A549 (cell line): ENCODE measurements at regions of chr5 and their contacts with region 1.

Region 1: DNA sequence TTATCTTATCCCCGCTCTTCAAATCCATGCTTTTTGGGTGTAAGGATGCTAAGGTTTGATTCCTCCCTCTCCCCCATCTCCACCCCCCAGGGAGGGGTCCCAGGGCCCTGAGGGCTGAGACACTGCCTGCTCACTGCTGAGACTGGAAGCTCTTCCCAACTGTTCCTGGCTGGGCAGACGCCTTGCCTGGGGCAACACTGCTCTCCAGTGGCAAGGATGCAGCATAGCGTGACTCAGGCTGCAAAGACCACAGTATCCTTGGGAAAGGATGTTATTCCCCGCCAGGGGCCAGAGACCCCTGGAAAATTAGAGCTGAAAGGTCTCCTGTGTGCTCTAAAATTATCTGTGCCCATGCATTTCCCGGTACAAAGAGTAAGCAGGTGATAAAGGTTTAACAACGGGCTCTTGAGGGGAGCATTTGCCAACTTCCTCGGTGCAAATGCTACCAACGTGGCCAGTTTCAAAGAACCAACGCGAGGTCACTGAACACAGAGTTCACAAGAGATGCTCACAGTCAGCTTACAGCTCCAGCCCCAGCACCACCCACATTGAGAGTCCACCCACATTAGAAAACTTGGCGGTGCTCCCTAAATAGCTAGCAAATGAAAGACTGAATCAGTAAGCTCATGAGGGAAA is 271.9 kb downstream of the NSG2 start:
- DNase-seq: peak; percentile 60 to 68
- ATAC-seq: peak; percentile 83 to 98
- H3K4me3 ChIP-seq: no peak overlapping the region
- H3K27ac ChIP-seq: no peak overlapping the region
- H3K4me1 ChIP-seq: no peaks in the 10 kb centered on the region
- CTCF ChIP-seq: peak; percentile 79
- EP300 ChIP-seq: no peak
- POLR2A ChIP-seq: no peak
- RAD21 ChIP-seq: peak; percentile 94 to 95

Region 2: DNA sequence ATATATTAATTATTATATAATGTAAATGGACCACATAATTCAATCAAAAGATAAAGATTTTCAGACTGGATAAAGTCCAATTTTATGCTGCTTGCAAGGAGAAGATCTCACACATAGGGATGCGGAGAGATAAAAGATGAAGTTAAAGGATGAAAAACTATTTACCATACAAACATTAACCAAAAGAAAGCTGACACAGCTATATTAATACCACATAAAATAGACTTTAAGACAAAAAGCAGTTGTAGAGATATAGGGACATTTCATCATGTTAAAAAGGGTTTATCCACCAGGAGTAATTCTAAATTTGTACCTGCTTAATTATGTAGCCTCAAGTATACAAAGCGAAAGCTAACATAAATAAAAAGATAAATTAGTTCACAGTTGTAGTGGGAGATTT is 287.1 kb before region 1 on chr5:
- CTCF ChIA-PET with region 1: interaction called, 12 read pairs
- POLR2A ChIA-PET with region 1: no interaction called
- DNase-seq: no peak
- ATAC-seq: no peak
- H3K4me3 ChIP-seq: no peak overlapping the region
- H3K27ac ChIP-seq: no peak overlapping the region
- H3K4me1 ChIP-seq: no peaks in the 10 kb centered on the region
- CTCF ChIP-seq: no peak
- EP300 ChIP-seq: no peak
- POLR2A ChIP-seq: no peak
- RAD21 ChIP-seq: no peak

Region 3: GRCh38 chr5:174045470-174046025 is 271.8 kb before region 1 on chr5 and contains the start of gene NSG2:
- CTCF ChIA-PET with region 1: interaction called, 422 read pairs
- POLR2A ChIA-PET with region 1: interaction called, 14 read pairs
- DNase-seq: peak; percentile 72 to 91
- ATAC-seq: peak; percentile 99 to 100
- H3K4me3 ChIP-seq: no peak within 1 kb of the TSS
- H3K27ac ChIP-seq: no peak within 1 kb of the TSS
- H3K4me1 ChIP-seq: no peaks in the 10 kb centered on the region
- CTCF ChIP-seq: peak; percentile 81
- EP300 ChIP-seq: no peak
- POLR2A ChIP-seq: no peak
- RAD21 ChIP-seq: peak; percentile 92
- polyA plus RNA-seq, gene NSG2: 0.05 and 0.06 TPM in 2 replicates

Region 4: GRCh38 chr5:174295702-174296436 is 21.5 kb before region 1 on chr5:
- CTCF ChIA-PET with region 1: interaction called, 52 read pairs
- POLR2A ChIA-PET with region 1: interaction called, 4 read pairs
- DNase-seq: no peak
- ATAC-seq: no peak
- H3K4me3 ChIP-seq: no peak overlapping the region
- H3K27ac ChIP-seq: no peak overlapping the region
- H3K4me1 ChIP-seq: no peaks in the 10 kb centered on the region
- CTCF ChIP-seq: no peak
- EP300 ChIP-seq: no peak
- POLR2A ChIP-seq: no peak
- RAD21 ChIP-seq: no peak

Region 5: GRCh38 chr5:174306345-174307030 is 10.9 kb before region 1 on chr5:
- CTCF ChIA-PET with region 1: interaction called, 52 read pairs
- POLR2A ChIA-PET with region 1: no interaction called
- DNase-seq: no peak
- ATAC-seq: no peak
- H3K4me3 ChIP-seq: no peak overlapping the region
- H3K27ac ChIP-seq: no peak overlapping the region
- H3K4me1 ChIP-seq: no peaks in the 10 kb centered on the region
- CTCF ChIP-seq: no peak
- EP300 ChIP-seq: no peak
- POLR2A ChIP-seq: no peak
- RAD21 ChIP-seq: no peak

Region 6: GRCh38 chr5:174327317-174328236 is 10.2 kb after region 1 on chr5:
- CTCF ChIA-PET with region 1: interaction called, 41 read pairs
- POLR2A ChIA-PET with region 1: no interaction called
- DNase-seq: peak; percentile 78 to 83
- ATAC-seq: peak; percentile 75 to 94
- H3K4me3 ChIP-seq: no peak overlapping the region
- H3K27ac ChIP-seq: peak overlapping the region; percentile 17 to 73; a peak in 3 of 6 replicates
- H3K4me1 ChIP-seq: peaks cover 9% of the 10 kb centered on the region; the same call in 1 of the 3 replicates
- CTCF ChIP-seq: peak; percentile 85
- EP300 ChIP-seq: no peak
- POLR2A ChIP-seq: no peak
- RAD21 ChIP-seq: peak; percentile 74 to 76

Region 7: DNA sequence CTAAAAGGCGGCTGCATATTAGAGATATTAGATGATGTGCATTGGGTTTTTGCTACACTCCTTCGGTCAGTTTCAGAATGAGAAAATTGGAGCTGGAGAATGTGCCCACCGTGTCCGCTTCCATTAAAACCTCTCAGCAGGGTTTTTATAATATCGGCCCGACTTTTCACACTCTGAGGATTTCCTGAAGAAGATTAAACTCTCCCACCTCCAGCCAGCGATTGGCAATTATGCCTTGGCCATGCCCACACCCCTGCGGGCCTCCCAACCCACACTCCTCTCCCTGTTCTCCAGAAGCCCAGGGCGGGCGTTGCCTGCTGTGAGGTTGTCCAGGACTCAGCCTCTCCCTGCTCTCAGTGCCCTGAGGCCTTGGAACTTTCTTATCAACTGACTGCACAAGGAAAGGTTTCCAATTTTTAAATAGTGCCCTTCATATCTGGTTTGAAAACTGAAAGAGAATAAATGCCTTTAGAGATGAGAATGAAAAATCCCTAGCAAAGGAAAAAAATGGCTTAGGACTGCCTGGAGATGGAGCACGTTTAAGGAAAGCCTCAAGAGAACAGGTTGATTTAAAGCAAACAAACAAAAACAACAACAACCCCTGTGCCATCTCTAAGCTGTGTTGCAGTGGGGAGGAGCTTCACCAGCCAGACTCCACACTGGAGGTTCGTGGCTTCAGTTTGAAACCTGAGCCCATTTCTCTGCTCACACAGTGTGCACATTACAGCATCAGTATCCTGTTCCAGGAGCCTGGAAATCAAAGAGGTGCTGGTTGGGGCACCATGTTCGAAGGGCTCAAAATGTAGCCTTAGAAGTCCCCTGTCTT is 21.0 kb after region 1 on chr5:
- CTCF ChIA-PET with region 1: interaction called, 11 read pairs
- POLR2A ChIA-PET with region 1: no interaction called
- DNase-seq: no peak
- ATAC-seq: peak in 1 of 2 experiments; percentile 34; a peak in 1 of 6 replicates
- H3K4me3 ChIP-seq: no peak overlapping the region
- H3K27ac ChIP-seq: no peak overlapping the region
- H3K4me1 ChIP-seq: no peaks in the 10 kb centered on the region
- CTCF ChIP-seq: no peak
- EP300 ChIP-seq: no peak
- POLR2A ChIP-seq: no peak
- RAD21 ChIP-seq: no peak